ENCODE measurements at regions of chr5 and their contacts with region 1.

Region 1: GRCh38 chr5:40879163-40879942 is 29.9 kb upstream of the C7 start:
- DNase-seq: peak in 2 of 9 experiments; percentile 26 to 42
- ATAC-seq: no peak
- H3K4me3 ChIP-seq: no peak overlapping the region
- H3K4me3 Mint-ChIP-seq: no peak overlapping the region
- H3K27ac ChIP-seq: no peak overlapping the region
- H3K27ac Mint-ChIP-seq: no peak overlapping the region
- H3K4me1 ChIP-seq: no peaks in the 10 kb centered on the region
- H3K4me1 Mint-ChIP-seq: peaks cover 3% of the 10 kb centered on the region
- H3K27me3 ChIP-seq: peaks cover 0 to 5% of the 10 kb centered on the region in 2 experiments
- H3K27me3 Mint-ChIP-seq: peaks cover 9% of the 10 kb centered on the region
- CTCF ChIP-seq: peak; percentile 82

Region 2: GRCh38 chr5:39578887-39579497 is 1300.4 kb before region 1 on chr5:
- CTCF ChIA-PET with region 1: interaction called, 3 read pairs
- POLR2A ChIA-PET with region 1: no interaction called
- intact Hi-C with region 1: loop called (anchors 1 kb)
- DNase-seq: peak in 2 of 9 experiments; percentile 36 to 52
- ATAC-seq: no peak
- H3K4me3 ChIP-seq: no peak overlapping the region
- H3K4me3 Mint-ChIP-seq: no peak overlapping the region
- H3K27ac ChIP-seq: no peak overlapping the region
- H3K27ac Mint-ChIP-seq: no peak overlapping the region
- H3K4me1 ChIP-seq: peaks cover 4% of the 10 kb centered on the region
- H3K4me1 Mint-ChIP-seq: peaks cover 6% of the 10 kb centered on the region
- H3K27me3 ChIP-seq: no peaks in the 10 kb centered on the region
- H3K27me3 Mint-ChIP-seq: peaks cover 5% of the 10 kb centered on the region
- CTCF ChIP-seq: peak; percentile 98

Region 3: GRCh38 chr5:39714036-39714698 is 1165.2 kb before region 1 on chr5:
- CTCF ChIA-PET with region 1: interaction called, 5 read pairs
- POLR2A ChIA-PET with region 1: no interaction called
- intact Hi-C with region 1: loop called (anchors 1 kb)
- DNase-seq: peak in 6 of 9 experiments; percentile 1 to 66 (median 26)
- ATAC-seq: no peak
- H3K4me3 ChIP-seq: no peak overlapping the region
- H3K4me3 Mint-ChIP-seq: no peak overlapping the region
- H3K27ac ChIP-seq: no peak overlapping the region
- H3K27ac Mint-ChIP-seq: no peak overlapping the region
- H3K4me1 ChIP-seq: no peaks in the 10 kb centered on the region
- H3K4me1 Mint-ChIP-seq: no peaks in the 10 kb centered on the region
- H3K27me3 ChIP-seq: no peaks in the 10 kb centered on the region
- H3K27me3 Mint-ChIP-seq: peaks cover 9% of the 10 kb centered on the region
- CTCF ChIP-seq: peak; percentile 67

Region 4: DNA sequence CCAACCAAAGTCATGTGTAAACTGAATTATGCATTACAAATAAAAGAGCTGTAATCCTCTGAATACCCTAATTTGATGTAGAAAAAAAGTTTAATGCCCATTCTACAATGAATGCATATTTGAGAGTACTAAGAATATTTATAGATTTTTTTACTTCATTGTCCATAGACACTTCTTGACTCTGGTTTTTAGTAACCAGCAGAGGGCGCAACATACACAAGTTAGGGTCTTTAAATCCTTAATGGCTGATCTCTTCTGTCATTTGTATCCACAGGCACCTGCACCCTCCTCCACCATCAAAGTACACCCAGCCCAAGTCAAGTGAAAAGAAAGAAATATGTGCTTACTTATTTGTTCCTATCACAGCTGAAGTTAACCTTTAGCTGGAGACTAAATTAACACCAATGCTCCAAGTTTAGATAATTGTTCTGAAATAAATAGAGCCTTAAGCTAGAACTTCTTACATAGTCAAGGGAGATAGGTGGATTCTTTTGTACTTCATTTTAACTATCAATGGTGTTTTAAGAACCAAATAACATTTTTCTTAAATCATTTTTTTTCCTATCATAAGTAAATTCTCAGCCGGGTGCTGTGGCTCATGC is 930.4 kb before region 1 on chr5:
- CTCF ChIA-PET with region 1: no interaction called
- POLR2A ChIA-PET with region 1: no interaction called
- intact Hi-C with region 1: loop called (anchors 5 to 10 kb)
- DNase-seq: peak; percentile 7 to 84 (median 63)
- ATAC-seq: peak; percentile 87
- H3K4me3 ChIP-seq: no peak overlapping the region
- H3K4me3 Mint-ChIP-seq: no peak overlapping the region
- H3K27ac ChIP-seq: no peak overlapping the region
- H3K27ac Mint-ChIP-seq: no peak overlapping the region
- H3K4me1 ChIP-seq: no peaks in the 10 kb centered on the region
- H3K4me1 Mint-ChIP-seq: peaks cover 2% of the 10 kb centered on the region
- H3K27me3 ChIP-seq: no peaks in the 10 kb centered on the region
- H3K27me3 Mint-ChIP-seq: no peaks in the 10 kb centered on the region
- CTCF ChIP-seq: peak; percentile 72

Region 5: DNA sequence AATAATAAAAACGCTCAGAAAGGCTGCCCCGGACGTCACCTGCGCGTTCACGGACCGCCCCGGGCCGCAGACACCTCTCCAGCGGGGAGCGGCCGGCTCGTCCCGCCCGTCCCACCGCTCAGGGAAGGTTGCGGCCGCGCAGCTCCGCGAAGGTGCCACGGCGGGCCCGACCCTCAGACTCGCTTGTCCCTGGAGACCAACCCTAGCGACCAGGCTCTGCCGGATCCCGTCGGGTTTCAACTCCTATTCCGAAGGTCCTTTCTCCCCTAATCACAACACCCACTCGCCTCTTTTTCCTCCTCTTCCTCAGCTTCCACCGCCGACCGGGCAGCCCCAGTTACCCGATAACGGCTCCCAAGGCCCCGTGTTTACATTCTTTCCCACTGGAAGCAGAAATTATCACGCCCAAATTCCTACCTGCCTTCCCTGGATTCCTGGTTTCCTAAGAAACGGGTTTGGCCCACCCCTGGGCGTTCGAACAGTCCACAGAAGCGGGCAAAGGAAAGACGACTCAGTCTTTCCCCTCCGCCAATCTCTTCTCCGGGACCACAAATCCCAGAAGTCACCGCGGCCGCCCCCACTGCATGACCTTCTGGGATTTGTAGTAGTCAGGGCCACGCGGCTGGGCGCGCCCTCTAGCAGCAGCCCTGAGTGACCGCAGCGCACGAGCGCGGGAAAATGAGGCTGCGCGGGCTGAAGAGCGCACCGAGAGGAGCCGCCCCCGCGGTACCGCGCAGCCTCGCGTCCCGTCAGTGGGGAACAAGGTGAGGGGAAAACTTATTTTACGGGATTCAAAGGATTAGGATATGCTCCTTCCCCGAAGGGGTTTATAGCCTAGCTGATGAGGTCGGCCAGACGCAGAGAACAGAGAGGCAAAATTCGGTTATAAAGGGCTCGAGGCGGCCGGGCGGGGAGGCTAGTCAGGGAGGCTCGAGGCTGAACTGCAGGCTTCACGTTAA is 123.7 kb before region 1 on chr5 and contains the start of gene TTC33:
- CTCF ChIA-PET with region 1: no interaction called
- POLR2A ChIA-PET with region 1: no interaction called
- intact Hi-C with region 1: loop called (anchors 1 to 5 kb)
- DNase-seq: peak; percentile 86 to 96 (median 94)
- ATAC-seq: peak; percentile 85
- H3K4me3 ChIP-seq: peak within 1 kb of the TSS; percentile 93 to 98
- H3K4me3 Mint-ChIP-seq: no peak within 1 kb of the TSS
- H3K27ac ChIP-seq: peak within 1 kb of the TSS; percentile 79 to 89
- H3K27ac Mint-ChIP-seq: no peak within 1 kb of the TSS
- H3K4me1 ChIP-seq: peaks cover 18% of the 10 kb centered on the region
- H3K4me1 Mint-ChIP-seq: peaks cover 24% of the 10 kb centered on the region
- H3K27me3 ChIP-seq: no peaks in the 10 kb centered on the region
- H3K27me3 Mint-ChIP-seq: no peaks in the 10 kb centered on the region
- CTCF ChIP-seq: peak; percentile 62
- total RNA-seq, gene TTC33: 6.7 to 7.1 TPM

Region 6: GRCh38 chr5:40774623-40775022 is 104.7 kb before region 1 on chr5:
- CTCF ChIA-PET with region 1: no interaction called
- POLR2A ChIA-PET with region 1: no interaction called
- intact Hi-C with region 1: loop called in 1 of 2 experiments (anchors 5 kb)
- DNase-seq: peak in 2 of 9 experiments; percentile 12 to 22
- ATAC-seq: no peak
- H3K4me3 ChIP-seq: no peak overlapping the region
- H3K4me3 Mint-ChIP-seq: no peak overlapping the region
- H3K27ac ChIP-seq: no peak overlapping the region
- H3K27ac Mint-ChIP-seq: no peak overlapping the region
- H3K4me1 ChIP-seq: no peaks in the 10 kb centered on the region
- H3K4me1 Mint-ChIP-seq: peaks cover 9% of the 10 kb centered on the region
- H3K27me3 ChIP-seq: no peaks in the 10 kb centered on the region
- H3K27me3 Mint-ChIP-seq: no peaks in the 10 kb centered on the region
- CTCF ChIP-seq: no peak

Region 7: GRCh38 chr5:40841068-40841805 is 38.1 kb before region 1 on chr5 and contains the start of gene CARD6:
- CTCF ChIA-PET with region 1: no interaction called
- POLR2A ChIA-PET with region 1: no interaction called
- intact Hi-C with region 1: loop called in 1 of 2 experiments (anchors 5 kb)
- DNase-seq: peak in 1 of 9 experiments; percentile 31
- ATAC-seq: no peak
- H3K4me3 ChIP-seq: peak within 1 kb of the TSS; percentile 39 to 47
- H3K4me3 Mint-ChIP-seq: peak within 1 kb of the TSS; percentile 79
- H3K27ac ChIP-seq: peak within 1 kb of the TSS in 1 of 2 experiments; percentile 36
- H3K27ac Mint-ChIP-seq: peak within 1 kb of the TSS; percentile 82
- H3K4me1 ChIP-seq: no peaks in the 10 kb centered on the region
- H3K4me1 Mint-ChIP-seq: peaks cover 10% of the 10 kb centered on the region
- H3K27me3 ChIP-seq: peaks cover 0 to 6% of the 10 kb centered on the region in 2 experiments
- H3K27me3 Mint-ChIP-seq: peaks cover 23% of the 10 kb centered on the region
- CTCF ChIP-seq: no peak
- total RNA-seq, gene CARD6: 0.39 to 0.43 TPM

Region 8: DNA sequence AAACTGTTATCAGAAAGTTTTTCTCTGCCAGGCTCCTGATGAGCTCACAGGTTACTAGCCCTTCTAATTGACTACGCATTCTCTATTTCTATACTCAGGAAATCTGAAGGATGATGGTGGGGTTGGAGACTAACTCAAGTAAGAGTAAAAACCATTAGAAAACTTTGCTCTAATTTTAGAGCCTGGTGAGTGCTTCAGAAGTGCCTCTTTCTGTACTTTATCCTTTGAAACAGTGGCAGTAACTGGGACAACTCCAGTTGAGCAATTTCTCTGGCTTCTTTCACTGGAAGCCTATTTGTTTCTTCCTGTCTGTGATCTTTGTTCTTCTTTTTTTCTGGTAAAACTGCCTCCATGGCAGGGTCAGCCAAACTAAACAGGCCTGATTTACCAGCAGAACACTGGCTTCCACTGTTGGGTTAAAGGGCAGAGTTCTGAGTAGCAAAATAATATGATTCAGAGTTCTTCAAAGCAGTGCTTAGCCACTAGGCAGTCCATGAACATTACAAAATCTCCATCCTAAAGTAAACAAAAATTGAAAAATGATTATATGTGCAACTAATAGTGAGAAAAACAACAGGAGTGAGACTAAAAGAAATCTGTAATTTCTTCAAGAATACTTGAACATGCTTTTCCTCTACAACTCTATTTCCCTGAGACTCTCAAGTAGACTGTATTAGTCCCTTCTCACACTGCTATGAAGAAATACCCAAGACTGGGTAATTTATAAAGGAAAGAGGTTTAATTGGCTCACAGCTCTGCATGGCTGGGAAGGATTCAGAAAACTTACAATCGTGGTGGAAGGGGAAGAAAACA is 112.0 kb after region 1 on chr5:
- CTCF ChIA-PET with region 1: no interaction called
- POLR2A ChIA-PET with region 1: no interaction called
- intact Hi-C with region 1: no loop called
- DNase-seq: no peak
- ATAC-seq: no peak
- H3K4me3 ChIP-seq: no peak overlapping the region
- H3K4me3 Mint-ChIP-seq: no peak overlapping the region
- H3K27ac ChIP-seq: no peak overlapping the region
- H3K27ac Mint-ChIP-seq: no peak overlapping the region
- H3K4me1 ChIP-seq: no peaks in the 10 kb centered on the region
- H3K4me1 Mint-ChIP-seq: no peaks in the 10 kb centered on the region
- H3K27me3 ChIP-seq: no peaks in the 10 kb centered on the region
- H3K27me3 Mint-ChIP-seq: peaks cover 4% of the 10 kb centered on the region
- CTCF ChIP-seq: no peak